Activated T-helper 1 cell treated with anti-CD3 and anti-CD28 coated beads, Interleukin-12 subunit alpha, Interleukin-12 subunit beta, Interleukin-2, Interleukin-4 antibody, amounts not matched to agents 30 ng/mL and 10 ng/mL and 1 ng/mL, durations not matched to agents 14 hours and 24 hours and 36 hours (primary cell): ENCODE measurements at regions of chr6 and their contacts with region 1.

Region 1: GRCh38 chr6:149060300-149060997 is 257.1 kb upstream of the TAB2 start:
- DNase-seq: peak; percentile 48
- H3K4me3 Mint-ChIP-seq: peak overlapping the region; percentile 76
- H3K27ac Mint-ChIP-seq: peak overlapping the region; percentile 89
- H3K4me1 Mint-ChIP-seq: peaks cover 64% of the 10 kb centered on the region
- H3K27me3 Mint-ChIP-seq: no peaks in the 10 kb centered on the region

Region 2: DNA sequence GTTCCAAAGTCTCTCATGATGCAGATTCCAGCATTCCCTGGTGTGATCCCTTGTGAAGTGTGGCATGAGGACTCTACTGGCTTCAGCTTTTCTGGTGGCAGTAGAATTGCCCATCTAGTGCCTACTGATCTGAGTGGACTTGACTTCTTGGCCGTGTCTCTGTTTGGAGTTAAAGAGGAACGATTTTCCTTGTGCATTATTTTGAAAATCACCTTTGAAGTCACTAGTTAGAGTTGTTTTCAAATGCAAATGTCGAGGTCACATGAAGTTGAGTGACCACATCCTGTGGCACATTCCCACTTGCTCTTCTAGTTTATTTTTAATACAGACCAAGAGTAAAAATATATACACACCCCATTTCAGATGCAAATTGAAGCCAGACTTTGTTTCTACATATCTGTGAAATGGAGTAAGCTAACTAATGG is 13.6 kb before region 1 on chr6:
- intact Hi-C with region 1: loop called (anchors 1 kb)
- DNase-seq: no peak
- H3K4me3 Mint-ChIP-seq: peak overlapping the region; percentile 72
- H3K27ac Mint-ChIP-seq: peak overlapping the region; percentile 74
- H3K4me1 Mint-ChIP-seq: peaks cover 44% of the 10 kb centered on the region
- H3K27me3 Mint-ChIP-seq: no peaks in the 10 kb centered on the region

Region 3: DNA sequence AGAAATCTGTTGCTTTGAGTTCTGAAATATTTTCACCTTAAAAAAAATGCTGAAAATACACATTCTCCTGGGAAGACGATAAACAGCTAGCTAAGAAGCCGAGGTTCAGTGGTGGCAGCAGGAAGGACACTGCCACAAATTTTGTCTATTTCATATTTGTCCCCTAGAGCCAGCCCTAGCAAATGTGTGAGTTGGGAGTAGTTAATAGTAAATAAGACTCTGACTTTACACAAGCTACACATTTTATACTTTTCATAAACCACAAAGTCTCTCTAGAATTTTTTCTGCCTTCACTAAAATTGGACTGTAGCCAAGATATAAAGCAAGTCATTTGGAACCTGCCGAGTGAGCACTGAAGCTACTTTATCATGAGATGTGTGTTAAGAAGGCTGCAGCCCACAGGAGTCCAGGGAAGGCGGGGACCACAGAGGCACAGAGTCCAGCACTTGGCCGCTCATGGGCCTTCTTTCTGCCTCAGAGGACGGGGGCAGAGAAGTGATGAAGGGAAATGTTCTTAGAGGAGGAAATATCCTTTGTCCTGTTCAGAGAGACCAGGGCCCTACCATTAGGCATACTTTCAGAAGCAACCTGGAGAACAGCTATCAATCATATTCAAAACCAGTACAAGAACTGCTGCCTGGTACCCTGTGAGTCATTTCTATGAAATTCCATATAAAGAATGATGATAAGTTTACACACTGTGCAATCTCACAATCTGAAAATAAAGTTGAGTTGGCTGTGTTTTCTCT is 15.3 kb after region 1 on chr6:
- intact Hi-C with region 1: loop called (anchors 2 kb)
- DNase-seq: no peak
- H3K4me3 Mint-ChIP-seq: no peak overlapping the region
- H3K27ac Mint-ChIP-seq: peak overlapping the region; percentile 62
- H3K4me1 Mint-ChIP-seq: peaks cover 61% of the 10 kb centered on the region
- H3K27me3 Mint-ChIP-seq: no peaks in the 10 kb centered on the region